ENCODE measurements at regions of chr13 and their contacts with region 1.

Region 1: DNA sequence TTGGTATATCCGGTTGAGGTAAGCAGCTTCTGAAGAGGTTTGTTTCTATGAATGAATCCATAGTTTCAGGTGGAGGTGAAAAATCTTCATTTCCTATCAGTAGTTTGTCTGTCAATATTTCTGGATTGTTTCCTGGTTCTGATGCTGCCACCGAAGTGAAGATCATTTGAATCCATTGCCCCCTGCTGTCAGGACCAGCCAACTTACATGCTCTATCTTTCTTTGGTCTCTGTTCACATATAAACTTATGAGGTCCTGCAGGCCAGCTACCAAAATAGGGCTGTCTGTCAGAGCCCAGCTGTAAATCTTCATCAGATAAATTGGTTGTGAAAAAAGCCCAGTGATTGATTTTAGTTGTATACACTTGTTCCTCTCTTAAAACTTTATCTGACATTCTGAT is 15.2 kb upstream of the N4BP2L1 start:
- DNase-seq: peak; percentile 47 to 63
- H3K4me3 ChIP-seq: no peak overlapping the region
- H3K4me3 Mint-ChIP-seq: no peak overlapping the region
- H3K27ac Mint-ChIP-seq: peak overlapping the region; percentile 14
- H3K4me1 ChIP-seq: peaks cover 50% of the 10 kb centered on the region
- H3K4me1 Mint-ChIP-seq: peaks cover 45% of the 10 kb centered on the region
- H3K27me3 ChIP-seq: no peaks in the 10 kb centered on the region
- H3K27me3 Mint-ChIP-seq: no peaks in the 10 kb centered on the region
- CTCF ChIP-seq: peak; percentile 39 to 70

Region 2: DNA sequence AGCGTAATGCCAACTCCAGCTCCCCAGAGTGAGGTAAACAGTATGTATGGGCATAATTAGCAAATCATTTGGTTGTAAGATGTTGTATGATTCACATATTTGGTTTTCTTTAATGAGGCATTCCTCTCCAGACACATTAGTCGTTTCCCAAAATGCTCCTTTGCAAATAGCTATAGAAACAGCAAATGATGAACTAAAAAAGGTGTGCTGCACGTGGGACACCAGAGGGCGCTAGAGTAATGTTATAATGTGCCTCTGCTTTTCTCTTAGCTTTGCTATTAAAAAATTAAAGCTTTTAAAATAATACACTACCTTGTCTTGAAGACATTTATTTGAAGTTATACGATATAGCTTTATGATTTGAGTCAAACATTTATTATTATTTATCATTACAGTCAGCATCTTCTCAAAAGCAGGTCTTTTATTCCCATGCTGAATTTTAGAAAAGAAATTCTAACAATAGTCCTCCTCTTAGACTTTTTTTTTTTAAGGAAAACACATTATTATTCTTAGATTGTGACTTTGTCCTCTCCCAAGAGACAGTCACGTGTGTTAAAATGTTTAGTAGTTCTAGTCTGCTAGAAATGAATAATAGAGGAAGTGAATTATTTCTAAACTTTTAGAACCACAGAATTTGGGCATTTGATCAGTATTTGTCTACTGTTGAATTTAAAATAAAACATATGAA is 533.1 kb before region 1 on chr13:
- CTCF ChIA-PET with region 1: no interaction called
- POLR2A ChIA-PET with region 1: no interaction called
- intact Hi-C with region 1: loop called (anchors 1 kb)
- DNase-seq: peak in 1 of 2 experiments; percentile 68
- H3K4me3 ChIP-seq: no peak overlapping the region
- H3K4me3 Mint-ChIP-seq: no peak overlapping the region
- H3K27ac Mint-ChIP-seq: no peak overlapping the region
- H3K4me1 ChIP-seq: peaks cover 10% of the 10 kb centered on the region
- H3K4me1 Mint-ChIP-seq: peaks cover 7% of the 10 kb centered on the region
- H3K27me3 ChIP-seq: no peaks in the 10 kb centered on the region
- H3K27me3 Mint-ChIP-seq: peaks cover 8% of the 10 kb centered on the region
- CTCF ChIP-seq: peak; percentile 85 to 89

Region 3: GRCh38 chr13:32246468-32246867 is 196.6 kb before region 1 on chr13:
- CTCF ChIA-PET with region 1: no interaction called
- POLR2A ChIA-PET with region 1: no interaction called
- intact Hi-C with region 1: no loop called
- DNase-seq: peak; percentile 85
- H3K4me3 ChIP-seq: no peak overlapping the region
- H3K4me3 Mint-ChIP-seq: peak overlapping the region; percentile 25
- H3K27ac Mint-ChIP-seq: peak overlapping the region; percentile 58
- H3K4me1 ChIP-seq: peaks cover 30% of the 10 kb centered on the region
- H3K4me1 Mint-ChIP-seq: peaks cover 25% of the 10 kb centered on the region
- H3K27me3 ChIP-seq: no peaks in the 10 kb centered on the region
- H3K27me3 Mint-ChIP-seq: no peaks in the 10 kb centered on the region
- CTCF ChIP-seq: peak; percentile 76 to 88

Region 4: GRCh38 chr13:32267836-32268439 is 175.2 kb before region 1 on chr13:
- CTCF ChIA-PET with region 1: no interaction called
- POLR2A ChIA-PET with region 1: no interaction called
- intact Hi-C with region 1: loop called (anchors 10 kb)
- DNase-seq: peak; percentile 77 to 79
- H3K4me3 ChIP-seq: no peak overlapping the region
- H3K4me3 Mint-ChIP-seq: no peak overlapping the region
- H3K27ac Mint-ChIP-seq: peak overlapping the region; percentile 27
- H3K4me1 ChIP-seq: peaks cover 30% of the 10 kb centered on the region
- H3K4me1 Mint-ChIP-seq: peaks cover 15% of the 10 kb centered on the region
- H3K27me3 ChIP-seq: no peaks in the 10 kb centered on the region
- H3K27me3 Mint-ChIP-seq: no peaks in the 10 kb centered on the region
- CTCF ChIP-seq: peak; percentile 87 to 92

Region 5: GRCh38 chr13:32334671-32335070 is 108.4 kb before region 1 on chr13:
- CTCF ChIA-PET with region 1: no interaction called
- POLR2A ChIA-PET with region 1: no interaction called
- intact Hi-C with region 1: loop called (anchors 5 kb)
- DNase-seq: no peak
- H3K4me3 ChIP-seq: no peak overlapping the region
- H3K4me3 Mint-ChIP-seq: no peak overlapping the region
- H3K27ac Mint-ChIP-seq: no peak overlapping the region
- H3K4me1 ChIP-seq: no peaks in the 10 kb centered on the region
- H3K4me1 Mint-ChIP-seq: no peaks in the 10 kb centered on the region
- H3K27me3 ChIP-seq: no peaks in the 10 kb centered on the region
- H3K27me3 Mint-ChIP-seq: no peaks in the 10 kb centered on the region
- CTCF ChIP-seq: no peak

Region 6: GRCh38 chr13:32381539-32381938 is 61.6 kb before region 1 on chr13:
- CTCF ChIA-PET with region 1: no interaction called
- POLR2A ChIA-PET with region 1: no interaction called
- intact Hi-C with region 1: loop called (anchors 1 kb)
- DNase-seq: peak in 1 of 2 experiments; percentile 42
- H3K4me3 ChIP-seq: no peak overlapping the region
- H3K4me3 Mint-ChIP-seq: no peak overlapping the region
- H3K27ac Mint-ChIP-seq: no peak overlapping the region
- H3K4me1 ChIP-seq: no peaks in the 10 kb centered on the region
- H3K4me1 Mint-ChIP-seq: no peaks in the 10 kb centered on the region
- H3K27me3 ChIP-seq: no peaks in the 10 kb centered on the region
- H3K27me3 Mint-ChIP-seq: no peaks in the 10 kb centered on the region
- CTCF ChIP-seq: peak in 1 of 2 experiments; percentile 53

Region 7: GRCh38 chr13:32427852-32428580 is 15.1 kb before region 1 on chr13 and contains the start of gene N4BP2L1:
- CTCF ChIA-PET with region 1: interaction called, 14 read pairs
- POLR2A ChIA-PET with region 1: interaction called, 6 read pairs
- intact Hi-C with region 1: loop called (anchors 1 kb)
- DNase-seq: peak; percentile 95 to 96
- H3K4me3 ChIP-seq: peak within 1 kb of the TSS; percentile 62
- H3K4me3 Mint-ChIP-seq: peak within 1 kb of the TSS; percentile 76
- H3K27ac Mint-ChIP-seq: peak within 1 kb of the TSS; percentile 69
- H3K4me1 ChIP-seq: peaks cover 22% of the 10 kb centered on the region
- H3K4me1 Mint-ChIP-seq: peaks cover 25% of the 10 kb centered on the region
- H3K27me3 ChIP-seq: no peaks in the 10 kb centered on the region
- H3K27me3 Mint-ChIP-seq: no peaks in the 10 kb centered on the region
- CTCF ChIP-seq: no peak
- total RNA-seq, gene N4BP2L1: 7.9 and 9.3 TPM in 2 replicates

Region 8: GRCh38 chr13:32538621-32539246 is 95.6 kb after region 1 on chr13 and contains the start of gene N4BP2L2:
- CTCF ChIA-PET with region 1: no interaction called
- POLR2A ChIA-PET with region 1: no interaction called
- intact Hi-C with region 1: loop called (anchors 2 kb)
- DNase-seq: peak; percentile 95 to 96
- H3K4me3 ChIP-seq: peak within 1 kb of the TSS; percentile 57
- H3K4me3 Mint-ChIP-seq: peak within 1 kb of the TSS; percentile 89
- H3K27ac Mint-ChIP-seq: peak within 1 kb of the TSS; percentile 96
- H3K4me1 ChIP-seq: peaks cover 4% of the 10 kb centered on the region
- H3K4me1 Mint-ChIP-seq: peaks cover 20% of the 10 kb centered on the region
- H3K27me3 ChIP-seq: no peaks in the 10 kb centered on the region
- H3K27me3 Mint-ChIP-seq: no peaks in the 10 kb centered on the region
- CTCF ChIP-seq: peak in 1 of 2 experiments; percentile 56
- total RNA-seq, gene N4BP2L2: 128 and 131 TPM in 2 replicates

Region 9: DNA sequence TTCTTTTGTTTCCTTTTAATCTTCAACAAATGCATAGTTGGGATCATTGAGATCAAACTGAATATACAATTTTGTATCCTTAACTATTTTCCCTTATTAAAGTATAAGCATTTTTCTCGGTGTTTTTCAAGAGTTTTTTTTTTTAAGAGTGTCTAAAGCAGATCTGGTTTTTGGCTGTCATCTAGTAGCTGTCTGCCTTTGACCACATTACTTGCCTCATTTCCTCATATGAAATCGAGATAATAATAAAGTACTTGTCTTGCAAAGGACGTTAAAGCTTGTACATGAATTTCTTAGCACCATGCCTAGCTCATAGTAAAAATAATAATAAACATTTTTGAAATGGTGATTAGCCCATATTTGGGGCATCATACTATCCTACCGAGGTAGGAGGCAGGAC is 264.4 kb after region 1 on chr13:
- CTCF ChIA-PET with region 1: no interaction called
- POLR2A ChIA-PET with region 1: no interaction called
- intact Hi-C with region 1: no loop called
- DNase-seq: no peak
- H3K4me3 ChIP-seq: no peak overlapping the region
- H3K4me3 Mint-ChIP-seq: no peak overlapping the region
- H3K27ac Mint-ChIP-seq: no peak overlapping the region
- H3K4me1 ChIP-seq: peaks cover 10% of the 10 kb centered on the region
- H3K4me1 Mint-ChIP-seq: peaks cover 3% of the 10 kb centered on the region
- H3K27me3 ChIP-seq: no peaks in the 10 kb centered on the region
- H3K27me3 Mint-ChIP-seq: no peaks in the 10 kb centered on the region
- CTCF ChIP-seq: no peak